ENCODE measurements at regions of chr11 and their contacts with region 1.

Region 1: GRCh38 chr11:66056501-66056900 is 4.3 kb downstream of the SF3B2 start:
- DNase-seq: no peak
- H3K4me3 ChIP-seq: no peak overlapping the region
- H3K27ac ChIP-seq: no peak overlapping the region
- H3K4me1 ChIP-seq: peaks cover 4% of the 10 kb centered on the region
- H3K27me3 ChIP-seq: no peaks in the 10 kb centered on the region
- CTCF ChIP-seq: no peak
- EP300 ChIP-seq: no peak
- POLR2A ChIP-seq: no peak

Region 2: DNA sequence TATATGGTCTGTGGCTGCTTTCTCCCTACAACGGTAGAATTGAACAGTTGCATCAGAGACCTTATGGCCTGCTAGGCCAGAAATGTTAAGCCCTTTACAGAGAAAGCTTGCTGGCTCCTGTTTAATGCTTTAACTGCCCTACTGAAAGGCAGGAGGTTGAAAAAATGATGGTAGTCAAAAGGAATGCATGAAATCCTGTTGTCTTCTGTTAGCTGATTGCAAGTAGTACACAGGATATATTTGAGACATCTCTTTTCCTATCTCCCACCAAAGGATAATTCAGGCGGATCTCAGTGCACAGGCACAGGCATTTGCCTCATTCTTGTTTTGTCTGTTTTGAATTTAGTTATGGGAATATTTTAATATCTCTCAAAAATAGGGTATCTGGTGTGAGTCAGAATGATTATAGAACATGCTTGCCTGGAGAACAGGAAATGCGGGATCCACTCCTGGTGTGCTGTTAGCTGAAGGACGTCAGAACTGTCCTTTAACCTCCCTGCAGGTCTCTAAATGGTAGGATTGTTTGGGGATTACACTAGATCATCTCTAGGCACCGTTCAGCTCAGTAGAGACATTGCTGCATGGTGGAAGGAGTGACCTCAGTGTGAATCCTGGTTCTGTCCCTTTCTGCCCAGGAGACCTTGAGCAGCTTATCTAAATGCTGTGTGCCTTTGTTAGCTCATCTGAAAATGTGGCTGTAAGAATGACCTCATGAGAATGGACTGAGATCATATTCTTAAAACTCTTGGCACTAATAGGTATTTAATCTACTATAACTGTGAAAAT is 63.0 kb after region 1 on chr11:
- intact Hi-C with region 1: loop called in 1 of 4 experiments (anchors 2 kb)
- DNase-seq: peak in 2 of 5 donors; percentile 11 to 47
- H3K4me3 ChIP-seq: no peak overlapping the region
- H3K27ac ChIP-seq: peak overlapping the region in 1 of 2 donors; percentile 49
- H3K4me1 ChIP-seq: peaks cover 11% of the 10 kb centered on the region
- H3K27me3 ChIP-seq: no peaks in the 10 kb centered on the region
- CTCF ChIP-seq: no peak
- EP300 ChIP-seq: no peak
- POLR2A ChIP-seq: no peak

Region 3: DNA sequence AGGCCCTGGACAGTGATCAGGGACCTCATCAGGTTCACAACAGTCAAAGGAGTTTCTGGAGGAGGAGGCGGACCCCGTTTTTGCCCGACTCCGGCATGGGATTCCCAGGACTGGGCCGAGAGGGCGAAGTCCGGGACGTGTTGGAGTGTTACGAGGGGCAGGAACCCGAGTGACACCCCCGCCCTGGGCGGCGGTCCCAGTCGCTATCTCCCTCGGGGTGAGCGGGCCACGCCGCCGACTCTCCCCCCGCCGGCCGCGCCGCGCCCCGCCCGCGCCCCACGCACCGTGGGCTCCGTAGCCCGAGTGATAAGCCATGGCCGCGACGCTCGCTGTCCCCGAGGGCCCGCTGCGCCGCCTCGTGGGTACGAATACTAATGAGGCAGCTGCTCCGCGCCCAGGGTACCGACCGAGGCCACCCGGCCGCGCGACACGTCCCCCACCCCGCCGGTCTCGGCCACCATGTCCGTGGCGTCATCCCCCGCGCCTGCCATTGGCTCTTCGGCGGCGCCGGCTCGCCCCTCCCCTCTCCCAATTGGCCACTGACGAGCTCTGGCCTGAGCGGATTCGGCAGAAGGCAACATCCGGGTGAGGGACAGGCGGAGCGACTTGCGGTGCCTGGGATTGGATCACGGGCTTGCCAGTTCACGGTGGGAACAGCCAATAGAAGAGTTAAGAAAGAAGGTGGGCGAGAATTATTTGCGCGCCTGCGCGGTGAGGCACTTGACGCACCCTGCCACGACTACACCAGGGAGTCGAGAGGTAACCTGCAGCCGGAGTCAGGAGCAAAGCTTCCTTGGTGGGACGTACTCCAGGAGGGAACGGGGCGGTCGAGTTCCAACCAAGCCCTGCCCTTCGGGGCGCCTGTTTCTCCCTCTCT is 232.4 kb after region 1 on chr11 and contains the start of gene YIF1A:
- intact Hi-C with region 1: no loop called
- DNase-seq: peak; percentile 98 to 99 (median 99)
- H3K4me3 ChIP-seq: peak within 1 kb of the TSS; percentile 92
- H3K27ac ChIP-seq: peak within 1 kb of the TSS; percentile 87 to 96
- H3K4me1 ChIP-seq: peaks cover 13% of the 10 kb centered on the region
- H3K27me3 ChIP-seq: no peaks in the 10 kb centered on the region
- CTCF ChIP-seq: peak in 1 of 3 donors; percentile 14
- EP300 ChIP-seq: no peak
- POLR2A ChIP-seq: peak; percentile 99
- total RNA-seq, gene YIF1A: 43.8 to 91.0 (median 67.5) TPM

Measured in ovary (tissue), 10 donors.